Naive thymus-derived CD4-positive, alpha-beta T cell (primary cell): ENCODE measurements at regions of chr9 and their contacts with region 1.

Region 1: GRCh38 chr9:71783120-71783530 is 14.8 kb upstream of the CEMIP2 start:
- DNase-seq: peak; percentile 60 to 93 (median 90)
- ATAC-seq: peak; percentile 98
- H3K4me3 ChIP-seq: peak overlapping the region; percentile 18
- H3K4me3 Mint-ChIP-seq: peak overlapping the region; percentile 62 to 82 (median 76)
- H3K27ac ChIP-seq: peak overlapping the region; percentile 85
- H3K27ac Mint-ChIP-seq: peak overlapping the region; percentile 94 to 100 (median 99)
- H3K4me1 ChIP-seq: peaks cover 38% of the 10 kb centered on the region in 2 donors
- H3K4me1 Mint-ChIP-seq: peaks cover 20 to 58% (median 53%) of the 10 kb centered on the region in 7 donors
- H3K27me3 ChIP-seq: no peaks in the 10 kb centered on the region
- H3K27me3 Mint-ChIP-seq: no peaks in the 10 kb centered on the region

Region 2: DNA sequence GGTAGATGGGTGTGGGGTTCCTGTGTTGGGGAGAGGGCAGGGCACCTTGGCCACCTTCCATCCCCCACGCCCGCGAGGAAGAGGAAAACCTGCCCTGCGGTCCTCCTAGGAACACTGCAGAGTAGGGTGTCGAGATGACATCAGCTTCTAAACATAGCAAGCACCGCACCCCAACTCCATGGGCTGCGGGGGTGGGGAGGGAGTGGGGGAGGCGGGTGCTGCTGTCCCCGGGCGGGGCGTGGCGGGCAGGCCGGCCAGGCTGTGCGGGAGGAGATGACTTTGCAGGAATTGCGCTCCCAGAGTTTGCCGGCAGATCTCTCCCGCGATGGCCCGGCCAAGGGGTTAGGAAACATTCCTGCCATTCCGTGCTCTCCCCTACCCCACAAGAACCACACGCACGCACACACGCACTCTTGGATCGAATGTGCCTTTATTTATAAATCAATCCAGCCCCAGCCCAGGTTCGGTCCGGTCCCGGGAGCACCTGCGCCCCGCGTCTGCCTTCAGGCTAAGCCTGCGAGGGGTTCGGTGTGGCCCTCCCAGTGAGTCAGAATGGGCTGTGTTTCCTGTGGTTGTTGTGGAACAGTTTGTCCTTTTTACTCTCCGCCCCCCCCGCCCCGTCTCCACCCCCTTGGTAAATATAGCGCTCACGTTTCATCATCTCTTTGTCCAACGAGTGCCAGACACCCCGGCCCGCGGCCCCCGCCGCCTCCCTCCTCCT is 1363.4 kb before region 1 on chr9:
- CTCF ChIA-PET with region 1: no interaction called
- POLR2A ChIA-PET with region 1: interaction called, 3 read pairs
- intact Hi-C with region 1: loop called (anchors 5 kb)
- DNase-seq: peak; percentile 69 to 92 (median 83)
- ATAC-seq: peak; percentile 69
- H3K4me3 ChIP-seq: peak overlapping the region; percentile 69
- H3K4me3 Mint-ChIP-seq: peak overlapping the region; percentile 87 to 99 (median 95)
- H3K27ac ChIP-seq: peak overlapping the region; percentile 92
- H3K27ac Mint-ChIP-seq: peak overlapping the region; percentile 75 to 100 (median 99)
- H3K4me1 ChIP-seq: peaks cover 38 to 43% of the 10 kb centered on the region in 2 donors
- H3K4me1 Mint-ChIP-seq: peaks cover 22 to 66% (median 42%) of the 10 kb centered on the region in 7 donors
- H3K27me3 ChIP-seq: no peaks in the 10 kb centered on the region
- H3K27me3 Mint-ChIP-seq: peaks cover 0 to 2% (median 0%) of the 10 kb centered on the region in 5 donors

Region 3: GRCh38 chr9:71748280-71748743 is 34.8 kb before region 1 on chr9:
- CTCF ChIA-PET with region 1: no interaction called
- POLR2A ChIA-PET with region 1: no interaction called
- intact Hi-C with region 1: no loop called
- DNase-seq: no peak
- ATAC-seq: peak; percentile 33
- H3K4me3 ChIP-seq: no peak overlapping the region
- H3K4me3 Mint-ChIP-seq: no peak overlapping the region
- H3K27ac ChIP-seq: no peak overlapping the region
- H3K27ac Mint-ChIP-seq: peak overlapping the region in 2 of 9 donors; percentile 64 to 65
- H3K4me1 ChIP-seq: peaks cover 0 to 10% of the 10 kb centered on the region in 2 donors
- H3K4me1 Mint-ChIP-seq: peaks cover 25 to 70% (median 34%) of the 10 kb centered on the region in 7 donors
- H3K27me3 ChIP-seq: no peaks in the 10 kb centered on the region
- H3K27me3 Mint-ChIP-seq: no peaks in the 10 kb centered on the region

Region 4: DNA sequence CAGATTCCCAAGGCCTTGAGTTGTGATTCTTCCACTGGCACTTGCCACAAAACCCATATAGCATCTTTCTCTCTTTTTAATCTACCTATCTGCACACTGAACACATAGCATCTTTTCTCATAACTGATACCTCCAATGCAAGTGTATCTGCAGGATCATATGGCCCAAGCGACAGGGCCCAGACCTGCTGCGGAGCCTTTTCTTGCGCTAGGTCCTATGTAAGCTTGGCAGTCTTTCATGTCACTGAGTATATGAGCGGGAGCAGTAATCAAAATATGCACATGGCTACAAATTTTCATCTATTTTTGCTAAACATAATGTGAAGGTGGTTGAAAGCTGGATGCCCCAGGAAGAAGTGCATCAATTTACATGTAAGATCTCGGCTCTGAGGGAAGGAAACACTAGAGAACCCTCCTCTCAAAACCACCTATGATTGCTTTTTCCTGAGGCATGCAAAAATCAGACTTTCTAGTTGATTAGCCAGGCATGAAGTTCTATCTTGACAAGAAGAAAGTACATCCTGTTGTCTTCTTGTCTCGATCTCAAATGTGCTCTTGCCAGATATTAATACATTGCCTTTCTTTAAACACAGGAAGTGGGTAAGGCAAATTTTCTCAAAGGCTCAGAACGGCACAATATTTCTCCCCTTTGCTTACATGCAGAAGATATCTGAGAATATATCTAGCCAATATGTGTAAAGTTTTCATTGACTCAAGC is 12.1 kb after region 1 on chr9:
- CTCF ChIA-PET with region 1: interaction called, 63 read pairs
- POLR2A ChIA-PET with region 1: interaction called, 147 read pairs
- intact Hi-C with region 1: loop called (anchors 1 kb)
- DNase-seq: peak in 7 of 9 donors; percentile 68 to 90 (median 85)
- ATAC-seq: peak; percentile 92
- H3K4me3 ChIP-seq: peak overlapping the region; percentile 17
- H3K4me3 Mint-ChIP-seq: peak overlapping the region; percentile 26 to 90 (median 76)
- H3K27ac ChIP-seq: peak overlapping the region; percentile 71
- H3K27ac Mint-ChIP-seq: peak overlapping the region; percentile 91 to 99 (median 96)
- H3K4me1 ChIP-seq: peaks cover 36 to 63% of the 10 kb centered on the region in 2 donors
- H3K4me1 Mint-ChIP-seq: peaks cover 44 to 87% (median 76%) of the 10 kb centered on the region in 7 donors
- H3K27me3 ChIP-seq: no peaks in the 10 kb centered on the region
- H3K27me3 Mint-ChIP-seq: no peaks in the 10 kb centered on the region

Region 5: GRCh38 chr9:71819115-71819739 is 36.1 kb after region 1 on chr9:
- CTCF ChIA-PET with region 1: interaction called, 111 read pairs
- POLR2A ChIA-PET with region 1: interaction called, 19 read pairs
- intact Hi-C with region 1: loop called (anchors 1 kb)
- DNase-seq: peak in 7 of 9 donors; percentile 26 to 61 (median 55)
- ATAC-seq: no peak
- H3K4me3 ChIP-seq: no peak overlapping the region
- H3K4me3 Mint-ChIP-seq: no peak overlapping the region
- H3K27ac ChIP-seq: no peak overlapping the region
- H3K27ac Mint-ChIP-seq: peak overlapping the region in 3 of 9 donors; percentile 12 to 60 (median 51)
- H3K4me1 ChIP-seq: peaks cover 7 to 8% of the 10 kb centered on the region in 2 donors
- H3K4me1 Mint-ChIP-seq: peaks cover 11 to 35% (median 26%) of the 10 kb centered on the region in 7 donors
- H3K27me3 ChIP-seq: no peaks in the 10 kb centered on the region
- H3K27me3 Mint-ChIP-seq: no peaks in the 10 kb centered on the region

Region 6: GRCh38 chr9:71897577-71897976 is 114.5 kb after region 1 on chr9:
- CTCF ChIA-PET with region 1: no interaction called
- POLR2A ChIA-PET with region 1: no interaction called
- intact Hi-C with region 1: loop called in 1 of 2 experiments (anchors 5 kb)
- DNase-seq: peak in 7 of 9 donors; percentile 17 to 53 (median 40)
- ATAC-seq: peak; percentile 80
- H3K4me3 ChIP-seq: no peak overlapping the region
- H3K4me3 Mint-ChIP-seq: peak overlapping the region in 8 of 10 donors; percentile 42 to 68 (median 60)
- H3K27ac ChIP-seq: no peak overlapping the region
- H3K27ac Mint-ChIP-seq: peak overlapping the region in 6 of 9 donors; percentile 15 to 83 (median 70)
- H3K4me1 ChIP-seq: peaks cover 36 to 37% of the 10 kb centered on the region in 2 donors
- H3K4me1 Mint-ChIP-seq: peaks cover 61 to 91% (median 79%) of the 10 kb centered on the region in 7 donors
- H3K27me3 ChIP-seq: no peaks in the 10 kb centered on the region
- H3K27me3 Mint-ChIP-seq: no peaks in the 10 kb centered on the region

Region 7: GRCh38 chr9:72022841-72023240 is 239.7 kb after region 1 on chr9:
- CTCF ChIA-PET with region 1: interaction called, 9 read pairs
- POLR2A ChIA-PET with region 1: no interaction called
- intact Hi-C with region 1: loop called in 1 of 2 experiments (anchors 1 kb)
- DNase-seq: no peak
- ATAC-seq: peak; percentile 64
- H3K4me3 ChIP-seq: no peak overlapping the region
- H3K4me3 Mint-ChIP-seq: no peak overlapping the region
- H3K27ac ChIP-seq: no peak overlapping the region
- H3K27ac Mint-ChIP-seq: no peak overlapping the region
- H3K4me1 ChIP-seq: no peaks in the 10 kb centered on the region
- H3K4me1 Mint-ChIP-seq: no peaks in the 10 kb centered on the region
- H3K27me3 ChIP-seq: no peaks in the 10 kb centered on the region
- H3K27me3 Mint-ChIP-seq: no peaks in the 10 kb centered on the region

Region 8: GRCh38 chr9:73149371-73150067 is 1366.4 kb after region 1 on chr9:
- CTCF ChIA-PET with region 1: no interaction called
- POLR2A ChIA-PET with region 1: no interaction called
- intact Hi-C with region 1: loop called in 1 of 2 experiments (anchors 5 kb)
- DNase-seq: peak in 1 of 9 donors; percentile 57
- ATAC-seq: peak; percentile 49
- H3K4me3 ChIP-seq: peak overlapping the region; percentile 17
- H3K4me3 Mint-ChIP-seq: peak overlapping the region in 9 of 10 donors; percentile 8 to 79 (median 60)
- H3K27ac ChIP-seq: peak overlapping the region; percentile 32
- H3K27ac Mint-ChIP-seq: peak overlapping the region; percentile 71 to 96 (median 78)
- H3K4me1 ChIP-seq: peaks cover 28 to 32% of the 10 kb centered on the region in 2 donors
- H3K4me1 Mint-ChIP-seq: peaks cover 34 to 80% (median 54%) of the 10 kb centered on the region in 7 donors
- H3K27me3 ChIP-seq: no peaks in the 10 kb centered on the region
- H3K27me3 Mint-ChIP-seq: peaks cover 0 to 2% (median 0%) of the 10 kb centered on the region in 5 donors